HepG2 (cell line): ENCODE measurements at regions of chr4 and their contacts with region 1.

Region 1: GRCh38 chr4:2186133-2186864 is 55.6 kb downstream of the HAUS3 start:
- DNase-seq: peak; percentile 57
- ATAC-seq: peak; percentile 97
- H3K4me3 ChIP-seq: no peak overlapping the region
- H3K27ac ChIP-seq: no peak overlapping the region
- H3K4me1 ChIP-seq: no peaks in the 10 kb centered on the region
- H3K27me3 ChIP-seq: no peaks in the 10 kb centered on the region
- CTCF ChIP-seq: peak; percentile 88
- EP300 ChIP-seq: no peak
- POLR2A ChIP-seq: no peak
- RAD21 ChIP-seq: peak; percentile 82

Region 2: GRCh38 chr4:1910643-1911042 is 275.7 kb before region 1 on chr4:
- CTCF ChIA-PET with region 1: interaction called, 16 read pairs
- POLR2A ChIA-PET with region 1: no interaction called
- in situ Hi-C with region 1: no loop called
- intact Hi-C with region 1: loop called (anchors 2 kb)
- DNase-seq: peak; percentile 55
- ATAC-seq: peak; percentile 88
- H3K4me3 ChIP-seq: no peak overlapping the region
- H3K27ac ChIP-seq: no peak overlapping the region
- H3K4me1 ChIP-seq: no peaks in the 10 kb centered on the region
- H3K27me3 ChIP-seq: no peaks in the 10 kb centered on the region
- CTCF ChIP-seq: peak; percentile 75
- EP300 ChIP-seq: no peak
- POLR2A ChIP-seq: no peak
- RAD21 ChIP-seq: peak; percentile 49; the same call in 1 of the 2 replicates

Region 3: GRCh38 chr4:2008875-2009703 is 177.2 kb before region 1 on chr4 and contains the start of gene NELFA:
- CTCF ChIA-PET with region 1: interaction called, 3 read pairs
- POLR2A ChIA-PET with region 1: no interaction called
- in situ Hi-C with region 1: loop called (anchors 25 kb)
- intact Hi-C with region 1: loop called (anchors 1 kb)
- DNase-seq: peak; percentile 93
- ATAC-seq: peak; percentile 87
- H3K4me3 ChIP-seq: peak within 1 kb of the TSS; percentile 80 to 100 (median 99)
- H3K27ac ChIP-seq: peak within 1 kb of the TSS; percentile 98
- H3K4me1 ChIP-seq: peaks cover 26% of the 10 kb centered on the region
- H3K27me3 ChIP-seq: no peaks in the 10 kb centered on the region; a peak in 1 of 5 replicates
- CTCF ChIP-seq: peak; percentile 66
- EP300 ChIP-seq: no peak
- POLR2A ChIP-seq: peak in 1 of 2 experiments; percentile 77; a peak in 2 of 4 replicates
- RAD21 ChIP-seq: peak; percentile 44; the same call in 1 of the 2 replicates
- total RNA-seq, gene NELFA: 11.4 and 18.5 TPM in 2 replicates